PC-9 (cell line): ENCODE measurements at regions of chr21 and their contacts with region 1.

Region 1: GRCh38 chr21:34952701-34953100 is 96.4 kb downstream of the RUNX1 start:
- DNase-seq: peak in 1 of 2 experiments; percentile 43
- H3K4me3 ChIP-seq: no peak overlapping the region
- H3K27ac ChIP-seq: no peak overlapping the region
- H3K4me1 ChIP-seq: 0 out of 2 replicates have a peak, but pooled peaks cover 9% of the 10 kb centered on the region
- H3K27me3 ChIP-seq: no peaks in the 10 kb centered on the region
- CTCF ChIP-seq: no peak

Region 2: DNA sequence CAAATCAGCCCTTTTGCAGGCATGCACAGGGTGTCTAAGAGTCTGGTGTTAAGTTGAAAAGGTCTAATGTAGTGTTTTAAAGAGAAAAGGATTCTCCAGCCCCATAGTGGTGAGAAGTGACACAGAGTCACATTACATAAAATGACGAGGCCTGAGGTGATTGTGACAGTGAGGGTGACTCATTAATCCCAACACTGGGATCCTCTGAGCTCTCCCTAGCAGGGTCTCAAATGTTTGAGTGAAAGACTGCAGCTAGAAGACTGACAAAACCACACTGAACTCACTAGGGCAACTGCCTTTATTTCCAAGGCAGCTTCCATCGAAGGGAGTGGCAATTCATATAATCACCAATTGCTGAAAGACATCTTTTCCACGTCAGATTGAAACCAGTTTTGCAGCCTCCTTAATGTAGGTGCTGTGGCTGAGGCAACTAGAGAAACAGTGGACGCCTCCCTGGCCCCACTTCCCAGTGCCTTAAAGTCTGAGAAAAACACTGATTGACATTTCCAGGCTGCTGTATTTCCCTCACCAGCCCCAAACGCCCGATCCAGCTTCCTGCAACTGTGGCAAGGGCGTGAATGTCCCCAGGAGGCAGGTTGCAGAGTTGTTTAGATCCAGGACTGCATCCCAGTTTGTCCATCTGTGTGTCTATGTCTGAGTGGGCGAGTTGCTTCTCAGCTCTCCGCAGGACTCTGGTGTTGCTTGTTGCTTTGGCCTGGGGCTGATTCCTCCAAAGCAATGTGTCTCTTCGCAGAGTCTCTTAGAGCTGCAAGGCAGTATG is 15.0 kb after region 1 on chr21:
- CTCF ChIA-PET with region 1: no interaction called
- POLR2A ChIA-PET with region 1: interaction called, 4 read pairs
- intact Hi-C with region 1: loop called (anchors 1 kb)
- DNase-seq: peak; percentile 60 to 87
- H3K4me3 ChIP-seq: no peak overlapping the region
- H3K27ac ChIP-seq: peak overlapping the region; percentile 92
- H3K4me1 ChIP-seq: peaks cover 54% of the 10 kb centered on the region
- H3K27me3 ChIP-seq: no peaks in the 10 kb centered on the region
- CTCF ChIP-seq: no peak